PC-9 (cell line): ENCODE measurements at regions of chr3 and their contacts with region 1.

Region 1: GRCh38 chr3:98522244-98523090 is at the start of gene CLDND1:
- DNase-seq: peak; percentile 96 to 98
- H3K4me3 ChIP-seq: peak within 1 kb of the TSS; percentile 83
- H3K27ac ChIP-seq: peak within 1 kb of the TSS; percentile 86
- H3K4me1 ChIP-seq: peaks cover 22% of the 10 kb centered on the region
- H3K27me3 ChIP-seq: no peaks in the 10 kb centered on the region
- CTCF ChIP-seq: 0 out of 2 replicates have a peak, but pooled peaks have one; percentile 18
- total RNA-seq, gene CLDND1: 143 and 152 TPM in 2 replicates

Region 2: DNA sequence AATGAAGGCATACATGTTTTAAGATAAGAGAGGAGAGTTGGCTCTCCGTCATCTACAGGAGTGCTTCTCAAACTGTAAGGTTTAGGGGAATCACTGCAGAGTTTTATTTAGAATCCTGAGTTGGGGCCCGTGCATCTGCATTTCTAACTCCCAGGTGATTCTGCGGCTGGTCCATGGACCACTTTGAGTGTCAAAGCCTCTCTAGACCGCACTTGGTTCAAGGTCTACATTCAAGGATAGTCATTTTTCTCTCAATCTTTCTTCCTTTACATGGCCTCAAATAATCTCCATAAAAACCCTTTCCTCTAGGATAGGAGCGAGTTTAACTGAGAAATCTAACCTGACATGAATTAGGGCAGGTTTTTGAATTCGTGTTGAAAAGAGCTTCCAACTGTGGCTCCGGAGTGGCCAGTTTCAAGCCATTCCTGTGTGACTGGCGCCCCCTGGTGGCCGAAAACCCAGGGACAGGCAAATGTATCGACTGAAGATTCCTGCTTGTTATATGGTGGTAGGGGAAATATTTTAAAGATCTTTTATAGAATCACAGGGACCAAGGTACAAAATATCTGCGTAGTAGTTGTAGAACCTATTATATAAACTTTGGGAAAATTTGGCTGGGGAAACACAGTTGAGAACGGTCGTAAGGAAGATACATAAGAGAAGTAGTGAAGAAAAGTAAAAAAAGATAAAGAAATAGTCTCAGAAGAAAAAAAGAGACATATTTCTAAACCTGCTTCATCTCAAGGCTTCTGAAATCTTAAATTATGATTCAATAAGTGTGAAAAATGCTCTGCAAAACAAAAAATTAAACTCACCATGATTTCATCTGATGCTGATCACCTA is 499.3 kb before region 1 on chr3:
- CTCF ChIA-PET with region 1: no interaction called
- POLR2A ChIA-PET with region 1: no interaction called
- intact Hi-C with region 1: no loop called
- DNase-seq: peak; percentile 75 to 88
- H3K4me3 ChIP-seq: no peak overlapping the region
- H3K27ac ChIP-seq: no peak overlapping the region
- H3K4me1 ChIP-seq: peaks cover 6% of the 10 kb centered on the region; the same call in 1 of the 2 replicates
- H3K27me3 ChIP-seq: no peaks in the 10 kb centered on the region
- CTCF ChIP-seq: peak; percentile 100

Region 3: DNA sequence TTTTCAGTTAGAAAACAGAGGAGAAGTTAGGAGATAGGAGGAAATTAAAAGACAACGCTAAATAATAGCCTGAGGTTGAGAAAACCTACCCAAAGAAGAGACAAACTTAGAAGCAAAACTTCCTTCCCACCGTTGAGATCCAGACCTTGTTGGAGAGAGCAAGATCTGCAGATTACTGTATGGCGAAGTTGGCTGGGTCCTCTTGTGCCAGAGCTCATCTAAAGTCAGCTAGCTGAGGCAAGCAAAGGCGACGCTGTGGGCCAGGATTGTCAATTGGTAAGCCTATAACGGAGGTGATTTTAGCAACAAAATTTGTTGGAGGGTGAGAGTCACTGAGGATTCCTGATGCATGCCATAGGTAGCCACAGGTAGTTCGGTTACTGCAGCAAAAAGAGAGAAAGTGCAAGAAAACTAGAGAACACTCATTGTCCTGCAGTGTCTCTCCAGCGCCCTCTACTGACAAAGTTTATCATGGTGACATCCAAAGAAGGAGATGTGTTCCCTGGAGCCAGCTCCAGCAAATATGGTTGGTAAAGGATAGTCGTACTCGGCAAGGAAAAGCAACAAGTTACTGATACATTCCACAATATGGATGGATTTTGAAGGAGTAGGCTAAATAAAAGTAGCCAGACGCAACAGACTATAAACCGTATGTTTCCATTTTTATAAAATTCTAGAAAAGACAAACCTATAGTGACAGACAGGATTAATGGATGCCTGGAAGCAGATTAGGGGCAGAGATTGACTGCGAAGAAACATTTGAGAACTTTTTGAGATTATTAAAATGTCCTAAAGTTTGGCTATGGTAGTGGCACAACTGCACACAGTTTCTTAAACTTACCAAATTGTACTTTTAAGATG is 178.6 kb before region 1 on chr3:
- CTCF ChIA-PET with region 1: no interaction called
- POLR2A ChIA-PET with region 1: no interaction called
- intact Hi-C with region 1: loop called (anchors 1 kb)
- DNase-seq: peak; percentile 36 to 42
- H3K4me3 ChIP-seq: no peak overlapping the region
- H3K27ac ChIP-seq: no peak overlapping the region
- H3K4me1 ChIP-seq: no peaks in the 10 kb centered on the region
- H3K27me3 ChIP-seq: no peaks in the 10 kb centered on the region
- CTCF ChIP-seq: peak; percentile 88

Region 4: GRCh38 chr3:98483130-98483482 is 39.4 kb before region 1 on chr3:
- CTCF ChIA-PET with region 1: no interaction called
- POLR2A ChIA-PET with region 1: interaction called, 11 read pairs
- intact Hi-C with region 1: loop called (anchors 1 kb)
- DNase-seq: peak; percentile 87 to 88
- H3K4me3 ChIP-seq: peak overlapping the region; percentile 35
- H3K27ac ChIP-seq: peak overlapping the region; percentile 94
- H3K4me1 ChIP-seq: peaks cover 30% of the 10 kb centered on the region
- H3K27me3 ChIP-seq: no peaks in the 10 kb centered on the region
- CTCF ChIP-seq: no peak

Region 5: GRCh38 chr3:98500039-98500438 is 22.4 kb before region 1 on chr3:
- CTCF ChIA-PET with region 1: interaction called, 4 read pairs
- POLR2A ChIA-PET with region 1: interaction called, 12 read pairs
- intact Hi-C with region 1: no loop called
- DNase-seq: peak in 1 of 2 experiments; percentile 67
- H3K4me3 ChIP-seq: no peak overlapping the region
- H3K27ac ChIP-seq: no peak overlapping the region
- H3K4me1 ChIP-seq: peaks cover 14% of the 10 kb centered on the region; the same call in 1 of the 2 replicates
- H3K27me3 ChIP-seq: no peaks in the 10 kb centered on the region
- CTCF ChIP-seq: no peak

Region 6: GRCh38 chr3:98540346-98540745 is 17.9 kb after region 1 on chr3:
- CTCF ChIA-PET with region 1: no interaction called
- POLR2A ChIA-PET with region 1: interaction called, 10 read pairs
- intact Hi-C with region 1: no loop called
- DNase-seq: no peak
- H3K4me3 ChIP-seq: no peak overlapping the region
- H3K27ac ChIP-seq: no peak overlapping the region
- H3K4me1 ChIP-seq: no peaks in the 10 kb centered on the region
- H3K27me3 ChIP-seq: no peaks in the 10 kb centered on the region
- CTCF ChIP-seq: no peak

Region 7: GRCh38 chr3:98563661-98564281 is 41.3 kb after region 1 on chr3:
- CTCF ChIA-PET with region 1: no interaction called
- POLR2A ChIA-PET with region 1: interaction called, 3 read pairs
- intact Hi-C with region 1: loop called (anchors 5 kb)
- DNase-seq: peak in 1 of 2 experiments; percentile 88
- H3K4me3 ChIP-seq: 0 out of 2 replicates have a peak overlapping the region, but pooled peaks have one; percentile 8
- H3K27ac ChIP-seq: peak overlapping the region; percentile 40
- H3K4me1 ChIP-seq: peaks cover 37% of the 10 kb centered on the region
- H3K27me3 ChIP-seq: no peaks in the 10 kb centered on the region
- CTCF ChIP-seq: no peak

Region 8: DNA sequence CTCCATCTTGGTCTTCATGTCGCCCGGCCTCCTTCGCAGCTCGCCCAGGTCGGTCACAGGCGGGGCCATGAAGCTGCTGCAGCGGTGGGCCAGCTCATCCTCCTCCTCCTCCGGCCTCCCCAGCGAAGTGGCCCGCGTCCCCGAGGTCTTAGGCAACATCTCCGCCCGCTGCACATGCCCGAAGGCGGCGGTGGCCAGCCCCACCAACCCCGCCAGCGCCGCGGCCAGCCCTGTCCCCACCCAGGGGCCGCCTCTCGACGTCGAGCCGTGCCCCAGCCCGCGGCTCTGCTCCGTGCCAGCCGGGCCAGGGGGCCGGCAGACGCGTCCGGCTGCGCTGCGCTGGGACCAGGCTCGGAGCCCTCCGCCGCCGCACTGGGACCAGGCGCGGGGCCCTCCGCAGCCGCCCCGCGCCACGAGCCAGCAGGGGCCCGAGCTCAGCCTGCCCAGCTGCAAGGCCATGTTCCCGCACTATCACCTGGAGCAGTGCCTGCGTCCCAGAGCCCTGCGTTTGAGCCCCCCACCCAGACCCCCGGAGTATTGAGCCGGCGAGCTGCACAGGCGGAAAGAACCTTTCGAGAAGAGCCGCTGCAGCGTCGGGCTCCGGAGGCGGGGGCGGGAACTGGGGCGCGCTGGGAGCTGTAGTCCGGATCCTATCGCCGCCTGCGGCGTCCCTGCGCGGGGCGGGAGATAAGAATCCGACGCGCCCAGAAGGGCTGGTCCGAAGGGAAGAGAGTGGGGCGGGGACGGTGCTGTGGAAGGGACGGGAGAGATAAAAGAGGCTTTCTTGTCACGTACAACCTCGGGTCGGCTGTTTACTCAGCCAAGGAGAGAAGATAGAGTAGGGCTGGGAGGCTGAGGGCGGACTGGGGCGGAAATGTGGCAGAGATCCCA is 70.8 kb after region 1 on chr3 and contains the start of gene CPOX:
- CTCF ChIA-PET with region 1: no interaction called
- POLR2A ChIA-PET with region 1: interaction called, 3 read pairs
- intact Hi-C with region 1: loop called (anchors 1 kb)
- DNase-seq: peak; percentile 88 to 94
- H3K4me3 ChIP-seq: peak within 1 kb of the TSS; percentile 66
- H3K27ac ChIP-seq: peak within 1 kb of the TSS; percentile 23
- H3K4me1 ChIP-seq: peaks cover 12% of the 10 kb centered on the region
- H3K27me3 ChIP-seq: no peaks in the 10 kb centered on the region
- CTCF ChIP-seq: no peak; the same call in 1 of the 2 replicates
- total RNA-seq, gene CPOX: 30.4 and 35.2 TPM in 2 replicates